CD8-positive, alpha-beta T cell (primary cell): ENCODE measurements at regions of chr22 and their contacts with region 1.

Region 1: DNA sequence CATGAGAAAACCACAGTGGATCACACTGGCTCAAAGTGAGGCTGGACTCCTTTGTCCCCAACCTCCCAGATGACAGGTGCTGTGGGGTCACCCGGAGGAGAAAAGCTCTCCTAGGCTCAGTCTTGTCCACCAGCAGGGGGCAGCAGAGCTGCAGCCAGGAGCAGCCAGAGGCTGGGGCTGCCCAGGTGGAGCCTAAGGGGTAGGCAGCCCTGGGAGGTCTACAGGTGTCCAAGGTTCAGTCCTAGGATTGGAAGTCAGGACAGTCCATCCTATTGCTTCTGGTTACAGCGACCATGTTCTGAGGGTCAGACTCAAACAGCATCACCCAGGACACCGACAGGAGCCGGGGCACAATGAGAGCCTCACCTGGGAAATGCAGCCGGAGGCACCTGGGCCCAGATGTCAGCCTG is 77.6 kb upstream of the IGLL5 start:
- DNase-seq: peak; percentile 57 to 89 (median 70)
- ATAC-seq: peak; percentile 84
- H3K4me3 ChIP-seq: no peak overlapping the region
- H3K4me3 Mint-ChIP-seq: peak overlapping the region; percentile 37
- H3K27ac ChIP-seq: peak overlapping the region in 1 of 2 experiments; percentile 55
- H3K27ac Mint-ChIP-seq: peak overlapping the region; percentile 49
- H3K4me1 ChIP-seq: peaks cover 21% of the 10 kb centered on the region
- H3K4me1 Mint-ChIP-seq: peaks cover 53% of the 10 kb centered on the region
- H3K27me3 ChIP-seq: no peaks in the 10 kb centered on the region
- H3K27me3 Mint-ChIP-seq: no peaks in the 10 kb centered on the region
- CTCF ChIP-seq: peak; percentile 64

Region 2: GRCh38 chr22:22030493-22031182 is 779.4 kb before region 1 on chr22:
- CTCF ChIA-PET with region 1: no interaction called
- POLR2A ChIA-PET with region 1: no interaction called
- intact Hi-C with region 1: no loop called
- DNase-seq: no peak
- ATAC-seq: no peak
- H3K4me3 ChIP-seq: no peak overlapping the region
- H3K4me3 Mint-ChIP-seq: no peak overlapping the region
- H3K27ac ChIP-seq: no peak overlapping the region
- H3K27ac Mint-ChIP-seq: no peak overlapping the region
- H3K4me1 ChIP-seq: no peaks in the 10 kb centered on the region
- H3K4me1 Mint-ChIP-seq: no peaks in the 10 kb centered on the region
- H3K27me3 ChIP-seq: no peaks in the 10 kb centered on the region
- H3K27me3 Mint-ChIP-seq: peaks cover 13% of the 10 kb centered on the region
- CTCF ChIP-seq: no peak

Region 3: GRCh38 chr22:22770280-22770871 is 39.6 kb before region 1 on chr22:
- CTCF ChIA-PET with region 1: interaction called, 17 read pairs
- POLR2A ChIA-PET with region 1: interaction called, 4 read pairs
- intact Hi-C with region 1: no loop called
- DNase-seq: peak in 6 of 9 experiments; percentile 41 to 66 (median 59)
- ATAC-seq: peak; percentile 70
- H3K4me3 ChIP-seq: no peak overlapping the region
- H3K4me3 Mint-ChIP-seq: no peak overlapping the region
- H3K27ac ChIP-seq: peak overlapping the region in 1 of 2 experiments; percentile 60
- H3K27ac Mint-ChIP-seq: peak overlapping the region; percentile 73
- H3K4me1 ChIP-seq: no peaks in the 10 kb centered on the region
- H3K4me1 Mint-ChIP-seq: peaks cover 56% of the 10 kb centered on the region
- H3K27me3 ChIP-seq: no peaks in the 10 kb centered on the region
- H3K27me3 Mint-ChIP-seq: no peaks in the 10 kb centered on the region
- CTCF ChIP-seq: peak; percentile 74

Region 4: GRCh38 chr22:22830193-22830592 is 20.2 kb after region 1 on chr22:
- CTCF ChIA-PET with region 1: interaction called, 11 read pairs
- POLR2A ChIA-PET with region 1: interaction called, 4 read pairs
- intact Hi-C with region 1: no loop called
- DNase-seq: no peak
- ATAC-seq: no peak
- H3K4me3 ChIP-seq: no peak overlapping the region
- H3K4me3 Mint-ChIP-seq: no peak overlapping the region
- H3K27ac ChIP-seq: no peak overlapping the region
- H3K27ac Mint-ChIP-seq: no peak overlapping the region
- H3K4me1 ChIP-seq: peaks cover 5% of the 10 kb centered on the region
- H3K4me1 Mint-ChIP-seq: peaks cover 24% of the 10 kb centered on the region
- H3K27me3 ChIP-seq: no peaks in the 10 kb centered on the region
- H3K27me3 Mint-ChIP-seq: no peaks in the 10 kb centered on the region
- CTCF ChIP-seq: no peak

Region 5: DNA sequence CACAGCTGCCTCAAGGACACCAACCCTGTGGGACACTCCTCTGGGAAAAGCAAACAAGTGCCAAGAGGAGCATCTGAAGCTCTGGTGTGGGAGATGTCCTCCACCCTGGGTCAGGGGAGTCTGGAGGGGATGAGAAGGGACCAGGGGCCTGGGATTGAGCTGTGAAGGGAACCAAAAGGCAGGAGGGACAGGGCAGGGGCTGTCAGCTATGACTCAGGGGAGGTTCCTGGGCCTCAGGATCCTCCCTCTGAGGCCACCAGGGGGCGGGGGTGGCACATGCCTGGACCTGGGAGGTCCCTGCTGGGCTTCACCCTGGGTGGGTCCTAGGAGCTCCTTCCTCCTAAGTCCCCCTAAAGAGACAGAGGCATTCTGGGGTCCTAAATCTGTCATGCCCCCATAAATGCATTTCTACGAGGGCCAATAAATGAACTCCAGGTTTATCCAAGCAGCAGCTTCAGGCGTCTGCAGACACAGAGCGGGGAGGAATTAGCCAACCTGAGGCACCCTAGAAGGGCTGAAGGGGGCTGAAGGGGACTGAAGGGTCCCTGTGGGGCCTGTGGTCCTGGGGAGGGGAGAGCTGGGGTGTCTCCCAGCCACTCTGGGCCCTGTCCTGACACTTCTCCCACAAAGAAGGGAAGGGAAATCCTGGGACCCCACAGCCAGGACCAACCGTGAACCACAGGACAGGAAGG is 45.7 kb after region 1 on chr22:
- CTCF ChIA-PET with region 1: interaction called, 248 read pairs
- POLR2A ChIA-PET with region 1: no interaction called
- intact Hi-C with region 1: no loop called
- DNase-seq: peak in 8 of 9 experiments; percentile 19 to 69 (median 40)
- ATAC-seq: peak; percentile 49
- H3K4me3 ChIP-seq: no peak overlapping the region
- H3K4me3 Mint-ChIP-seq: no peak overlapping the region
- H3K27ac ChIP-seq: no peak overlapping the region
- H3K27ac Mint-ChIP-seq: no peak overlapping the region
- H3K4me1 ChIP-seq: no peaks in the 10 kb centered on the region
- H3K4me1 Mint-ChIP-seq: peaks cover 1% of the 10 kb centered on the region
- H3K27me3 ChIP-seq: no peaks in the 10 kb centered on the region
- H3K27me3 Mint-ChIP-seq: no peaks in the 10 kb centered on the region
- CTCF ChIP-seq: peak; percentile 35

Region 6: GRCh38 chr22:22870577-22871404 is 60.8 kb after region 1 on chr22:
- CTCF ChIA-PET with region 1: interaction called, 19 read pairs
- POLR2A ChIA-PET with region 1: no interaction called
- intact Hi-C with region 1: loop called in 1 of 2 experiments (anchors 1 kb)
- DNase-seq: peak in 3 of 9 experiments; percentile 29 to 47 (median 46)
- ATAC-seq: no peak
- H3K4me3 ChIP-seq: no peak overlapping the region
- H3K4me3 Mint-ChIP-seq: no peak overlapping the region
- H3K27ac ChIP-seq: no peak overlapping the region
- H3K27ac Mint-ChIP-seq: no peak overlapping the region
- H3K4me1 ChIP-seq: peaks cover 10% of the 10 kb centered on the region
- H3K4me1 Mint-ChIP-seq: peaks cover 26% of the 10 kb centered on the region
- H3K27me3 ChIP-seq: no peaks in the 10 kb centered on the region
- H3K27me3 Mint-ChIP-seq: no peaks in the 10 kb centered on the region
- CTCF ChIP-seq: no peak

Region 7: GRCh38 chr22:22877523-22878210 is 67.6 kb after region 1 on chr22:
- CTCF ChIA-PET with region 1: interaction called, 281 read pairs
- POLR2A ChIA-PET with region 1: interaction called, 6 read pairs
- intact Hi-C with region 1: loop called (anchors 1 kb)
- DNase-seq: peak; percentile 56 to 91 (median 81)
- ATAC-seq: peak; percentile 59
- H3K4me3 ChIP-seq: no peak overlapping the region
- H3K4me3 Mint-ChIP-seq: no peak overlapping the region
- H3K27ac ChIP-seq: no peak overlapping the region
- H3K27ac Mint-ChIP-seq: peak overlapping the region; percentile 41
- H3K4me1 ChIP-seq: no peaks in the 10 kb centered on the region
- H3K4me1 Mint-ChIP-seq: peaks cover 7% of the 10 kb centered on the region
- H3K27me3 ChIP-seq: no peaks in the 10 kb centered on the region
- H3K27me3 Mint-ChIP-seq: no peaks in the 10 kb centered on the region
- CTCF ChIP-seq: peak; percentile 78

Region 8: DNA sequence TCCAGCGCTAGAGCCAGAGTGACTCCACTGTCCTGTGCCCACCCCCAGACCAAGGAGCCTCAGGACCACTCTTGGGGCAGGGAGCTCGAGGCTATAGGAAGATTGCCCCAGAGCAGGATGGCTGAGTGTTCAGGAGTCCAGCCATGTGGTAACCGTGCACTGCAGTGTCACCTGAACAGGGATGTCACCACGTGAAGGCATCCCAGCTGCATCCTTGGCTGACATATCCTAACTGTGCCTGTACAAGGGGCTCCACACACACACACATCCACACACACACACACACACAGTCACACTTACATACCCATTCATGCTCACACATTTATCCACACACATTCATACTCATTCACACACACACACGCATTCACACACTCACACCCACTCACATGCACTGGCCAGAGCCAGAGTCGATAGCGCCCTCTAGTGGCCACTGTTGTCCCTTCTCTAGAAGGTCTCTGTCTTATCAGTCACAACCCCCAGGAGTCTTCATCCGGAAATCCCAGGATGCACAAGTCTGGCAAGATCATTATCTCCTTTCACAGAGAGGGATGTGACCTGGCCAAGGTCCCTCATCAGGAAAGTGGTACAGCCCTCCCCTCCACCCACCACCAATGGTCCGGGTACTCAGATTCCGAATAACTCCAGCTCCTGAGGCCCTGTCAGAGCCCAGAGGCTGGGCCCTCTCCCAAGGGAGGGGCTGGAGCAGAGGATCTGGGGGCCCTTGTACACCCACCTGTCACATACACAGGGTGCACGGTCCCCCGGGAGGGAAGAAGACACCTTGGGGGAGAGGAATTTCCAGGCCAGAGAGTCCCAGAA is 132.7 kb after region 1 on chr22:
- CTCF ChIA-PET with region 1: no interaction called
- POLR2A ChIA-PET with region 1: no interaction called
- intact Hi-C with region 1: loop called in 1 of 2 experiments (anchors 5 kb)
- DNase-seq: peak; percentile 52 to 83 (median 79)
- ATAC-seq: peak; percentile 78
- H3K4me3 ChIP-seq: no peak overlapping the region
- H3K4me3 Mint-ChIP-seq: no peak overlapping the region
- H3K27ac ChIP-seq: no peak overlapping the region
- H3K27ac Mint-ChIP-seq: peak overlapping the region; percentile 4
- H3K4me1 ChIP-seq: no peaks in the 10 kb centered on the region
- H3K4me1 Mint-ChIP-seq: peaks cover 2% of the 10 kb centered on the region
- H3K27me3 ChIP-seq: no peaks in the 10 kb centered on the region
- H3K27me3 Mint-ChIP-seq: no peaks in the 10 kb centered on the region
- CTCF ChIP-seq: peak; percentile 76